A549 (cell line): ENCODE measurements at regions of chr9 and their contacts with region 1.

Region 1: GRCh38 chr9:136885950-136886578 is at the start of gene TRAF2:
- DNase-seq: peak; percentile 99 to 100
- ATAC-seq: peak; percentile 82 to 86
- H3K4me3 ChIP-seq: peak within 1 kb of the TSS; percentile 99
- H3K27ac ChIP-seq: peak within 1 kb of the TSS; percentile 98 to 99
- H3K4me1 ChIP-seq: peaks cover 57% of the 10 kb centered on the region
- CTCF ChIP-seq: no peak
- EP300 ChIP-seq: no peak
- POLR2A ChIP-seq: peak; percentile 93
- RAD21 ChIP-seq: no peak
- polyA plus RNA-seq, gene TRAF2: 23.8 and 24.5 TPM in 2 replicates

Region 2: GRCh38 chr9:136858844-136859757 is 27.0 kb before region 1 on chr9:
- CTCF ChIA-PET with region 1: interaction called, 45 read pairs
- POLR2A ChIA-PET with region 1: interaction called, 12 read pairs
- DNase-seq: peak in 1 of 2 experiments; percentile 50
- ATAC-seq: peak; percentile 27 to 64
- H3K4me3 ChIP-seq: no peak overlapping the region
- H3K27ac ChIP-seq: peak overlapping the region; percentile 79 to 89
- H3K4me1 ChIP-seq: peaks cover 73% of the 10 kb centered on the region
- CTCF ChIP-seq: no peak
- EP300 ChIP-seq: no peak
- POLR2A ChIP-seq: 0 out of 2 replicates have a peak, but pooled peaks have one; percentile 2
- RAD21 ChIP-seq: no peak

Region 3: GRCh38 chr9:136865735-136866103 is 20.3 kb before region 1 on chr9:
- CTCF ChIA-PET with region 1: interaction called, 45 read pairs
- POLR2A ChIA-PET with region 1: interaction called, 12 read pairs
- DNase-seq: no peak
- ATAC-seq: peak; percentile 5 to 44; a peak in 4 of 6 replicates
- H3K4me3 ChIP-seq: peak overlapping the region; percentile 91
- H3K27ac ChIP-seq: peak overlapping the region; percentile 89 to 99
- H3K4me1 ChIP-seq: peaks cover 27% of the 10 kb centered on the region
- CTCF ChIP-seq: no peak
- EP300 ChIP-seq: no peak
- POLR2A ChIP-seq: no peak
- RAD21 ChIP-seq: no peak

Region 4: GRCh38 chr9:136936645-136937170 is 50.6 kb after region 1 on chr9:
- CTCF ChIA-PET with region 1: no interaction called
- POLR2A ChIA-PET with region 1: no interaction called
- DNase-seq: no peak
- ATAC-seq: no peak
- H3K4me3 ChIP-seq: no peak overlapping the region
- H3K27ac ChIP-seq: no peak overlapping the region
- H3K4me1 ChIP-seq: peaks cover 13% of the 10 kb centered on the region
- CTCF ChIP-seq: no peak
- EP300 ChIP-seq: no peak
- POLR2A ChIP-seq: no peak
- RAD21 ChIP-seq: no peak

Region 5: DNA sequence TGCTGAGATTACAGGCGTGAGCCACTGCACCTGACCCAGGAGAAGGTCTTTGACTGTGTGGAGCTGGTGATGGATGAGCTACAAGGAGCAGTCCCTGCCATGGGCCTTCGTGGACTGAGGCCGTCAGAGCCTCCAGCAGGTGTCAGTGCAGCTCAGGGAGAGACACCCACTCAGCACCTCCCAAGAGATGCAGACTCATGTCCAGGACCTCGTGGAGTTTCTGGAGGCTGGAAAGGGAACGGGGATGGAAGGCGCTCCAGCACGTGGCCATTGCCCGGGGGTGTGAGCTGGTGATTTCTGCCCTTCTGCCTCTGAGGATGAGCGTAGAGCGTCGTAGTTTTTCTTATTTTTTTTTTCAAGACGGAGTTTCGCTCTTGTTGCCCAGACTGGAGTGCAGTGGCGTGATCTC is 400.9 kb after region 1 on chr9:
- CTCF ChIA-PET with region 1: no interaction called
- POLR2A ChIA-PET with region 1: no interaction called
- DNase-seq: peak; percentile 88 to 94
- ATAC-seq: peak; percentile 99 to 100
- H3K4me3 ChIP-seq: no peak overlapping the region
- H3K27ac ChIP-seq: no peak overlapping the region
- H3K4me1 ChIP-seq: peaks cover 7% of the 10 kb centered on the region; the same call in 1 of the 3 replicates
- CTCF ChIP-seq: peak; percentile 54
- EP300 ChIP-seq: no peak
- POLR2A ChIP-seq: no peak
- RAD21 ChIP-seq: peak; percentile 59 to 86